Heart right ventricle (tissue), 16 donors: ENCODE measurements at regions of chr2 and their contacts with region 1.

Region 1: DNA sequence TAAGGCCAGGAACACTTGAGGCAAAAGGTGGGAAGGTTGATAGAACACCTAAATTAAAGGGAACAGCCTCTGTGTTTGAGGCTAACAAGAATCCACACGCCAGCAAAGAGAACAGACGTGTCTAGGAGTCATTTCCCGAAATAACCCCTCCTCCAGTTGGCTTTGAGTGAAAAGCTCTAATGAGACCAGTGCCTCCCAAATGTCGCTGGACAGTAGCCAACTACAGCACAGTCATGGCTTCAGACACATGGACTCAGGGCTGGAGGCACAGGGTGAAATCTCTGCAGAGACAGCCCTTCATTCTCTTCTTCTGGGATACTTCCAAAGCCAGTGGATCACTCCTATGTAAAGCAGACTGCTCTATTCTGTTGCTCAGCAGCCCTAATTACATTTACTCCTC is 49.6 kb downstream of the SOWAHC start:
- DNase-seq: peak; percentile 31 to 82
- ATAC-seq: peak; percentile 64 to 98 (median 91)
- H3K4me3 ChIP-seq: no peak overlapping the region
- H3K27ac ChIP-seq: peak overlapping the region in 1 of 10 donors; percentile 40
- H3K4me1 ChIP-seq: peaks cover 0 to 15% (median 10%) of the 10 kb centered on the region in 9 donors
- H3K27me3 ChIP-seq: no peaks in the 10 kb centered on the region
- CTCF ChIP-seq: no peak

Region 2: DNA sequence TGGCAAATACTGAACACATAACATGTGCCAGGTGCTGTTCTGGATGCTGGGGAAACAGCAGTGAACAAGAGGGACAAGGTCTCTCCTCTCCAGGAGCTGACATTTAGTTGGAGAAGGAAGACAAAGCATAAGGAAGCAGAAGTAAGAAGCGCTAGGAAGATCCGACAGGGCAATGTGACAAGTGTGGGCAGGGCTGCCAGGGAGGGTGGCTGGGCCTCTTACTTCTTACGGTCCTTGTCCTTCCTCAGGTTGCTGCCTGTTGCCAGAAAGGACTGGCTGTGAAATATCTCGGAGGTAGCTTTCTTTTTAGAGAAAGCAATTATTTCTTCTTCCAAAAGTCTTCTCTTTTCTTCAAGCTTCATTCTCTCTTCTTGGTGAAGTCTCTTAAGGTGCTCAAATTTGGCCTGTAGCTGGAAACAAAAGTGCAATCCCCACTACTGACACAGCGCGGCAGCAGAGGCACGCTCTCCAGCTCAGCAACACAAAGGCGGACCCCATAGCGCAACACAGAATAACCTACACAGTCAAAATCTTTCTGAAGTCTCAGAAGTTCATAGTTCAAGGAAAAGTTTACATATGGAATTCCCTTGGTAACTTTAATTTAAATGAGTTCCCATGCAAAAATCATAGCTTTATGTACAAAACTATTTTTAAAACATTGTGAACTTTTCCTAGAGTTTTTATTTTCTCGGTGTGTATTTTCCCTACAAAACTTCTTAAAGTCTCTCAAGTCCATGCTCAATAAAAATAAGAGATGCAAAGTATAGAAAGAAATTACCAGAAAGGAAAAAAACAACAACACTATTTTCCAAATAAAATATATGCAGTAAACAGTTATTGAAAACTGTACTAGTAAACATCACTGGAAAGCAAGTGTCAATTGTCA is 117.7 kb before region 1 on chr2:
- intact Hi-C with region 1: no loop called
- DNase-seq: peak; percentile 61 to 66
- ATAC-seq: peak; percentile 79 to 95 (median 89)
- H3K4me3 ChIP-seq: no peak overlapping the region
- H3K27ac ChIP-seq: no peak overlapping the region
- H3K4me1 ChIP-seq: peaks cover 0 to 3% (median 0%) of the 10 kb centered on the region in 9 donors
- H3K27me3 ChIP-seq: no peaks in the 10 kb centered on the region
- CTCF ChIP-seq: peak; percentile 80 to 97 (median 94)

Region 3: GRCh38 chr2:109624339-109624738 is 39.4 kb before region 1 on chr2:
- intact Hi-C with region 1: loop called in 2 of 10 experiments (anchors 5 to 10 kb)
- DNase-seq: no peak
- ATAC-seq: no peak
- H3K4me3 ChIP-seq: no peak overlapping the region
- H3K27ac ChIP-seq: no peak overlapping the region
- H3K4me1 ChIP-seq: no peaks in the 10 kb centered on the region
- H3K27me3 ChIP-seq: peaks cover 0 to 8% (median 0%) of the 10 kb centered on the region in 7 donors
- CTCF ChIP-seq: no peak